ENCODE measurements at regions of chr17 and their contacts with region 1.

Region 1: DNA sequence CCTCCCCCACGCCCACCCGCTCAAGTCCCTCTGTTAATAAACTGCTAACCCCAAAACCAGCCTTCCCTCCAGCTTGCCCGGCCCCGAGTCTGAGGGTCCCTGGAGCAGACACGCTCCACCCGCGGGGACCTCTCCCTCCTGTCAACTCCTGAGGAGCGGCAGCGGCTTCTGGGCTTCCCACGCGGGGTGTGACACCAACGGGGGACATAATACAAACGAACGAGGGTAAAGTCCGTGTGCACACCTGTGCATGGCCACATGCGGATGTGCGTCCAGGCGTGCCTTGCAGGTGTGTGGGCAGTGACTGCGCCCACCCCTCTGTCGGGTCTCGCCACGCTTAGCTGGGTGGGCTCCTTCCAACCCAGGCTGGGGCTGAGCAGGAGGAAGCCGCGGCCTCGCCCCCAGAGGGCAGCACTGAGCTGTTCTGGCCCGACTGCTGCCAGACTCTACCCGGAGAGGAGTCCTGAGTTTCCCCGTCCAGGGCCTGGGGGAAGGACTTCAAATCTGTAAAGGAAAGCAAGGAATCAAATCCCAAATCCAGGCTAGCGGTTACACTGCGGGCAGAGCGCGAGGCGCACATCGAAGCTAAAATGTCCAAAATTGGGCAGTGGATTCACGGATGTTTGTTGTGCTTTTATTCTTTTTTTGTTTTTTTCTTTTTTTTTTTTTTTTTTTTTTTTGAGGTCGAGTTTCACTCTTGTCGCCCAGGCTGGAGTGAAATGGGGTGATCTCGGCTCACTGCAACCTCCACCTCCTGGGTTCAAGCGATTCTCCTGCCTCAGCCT is 24.2 kb upstream of the KRT17 start:
- DNase-seq: peak; percentile 76
- H3K27ac ChIP-seq: peak overlapping the region; percentile 100
- CTCF ChIP-seq: peak; percentile 85

Region 2: GRCh38 chr17:41251261-41251660 is 397.3 kb before region 1 on chr17:
- CTCF ChIA-PET with region 1: no interaction called
- POLR2A ChIA-PET with region 1: no interaction called
- DNase-seq: no peak
- H3K27ac ChIP-seq: no peak overlapping the region
- CTCF ChIP-seq: no peak

Region 3: DNA sequence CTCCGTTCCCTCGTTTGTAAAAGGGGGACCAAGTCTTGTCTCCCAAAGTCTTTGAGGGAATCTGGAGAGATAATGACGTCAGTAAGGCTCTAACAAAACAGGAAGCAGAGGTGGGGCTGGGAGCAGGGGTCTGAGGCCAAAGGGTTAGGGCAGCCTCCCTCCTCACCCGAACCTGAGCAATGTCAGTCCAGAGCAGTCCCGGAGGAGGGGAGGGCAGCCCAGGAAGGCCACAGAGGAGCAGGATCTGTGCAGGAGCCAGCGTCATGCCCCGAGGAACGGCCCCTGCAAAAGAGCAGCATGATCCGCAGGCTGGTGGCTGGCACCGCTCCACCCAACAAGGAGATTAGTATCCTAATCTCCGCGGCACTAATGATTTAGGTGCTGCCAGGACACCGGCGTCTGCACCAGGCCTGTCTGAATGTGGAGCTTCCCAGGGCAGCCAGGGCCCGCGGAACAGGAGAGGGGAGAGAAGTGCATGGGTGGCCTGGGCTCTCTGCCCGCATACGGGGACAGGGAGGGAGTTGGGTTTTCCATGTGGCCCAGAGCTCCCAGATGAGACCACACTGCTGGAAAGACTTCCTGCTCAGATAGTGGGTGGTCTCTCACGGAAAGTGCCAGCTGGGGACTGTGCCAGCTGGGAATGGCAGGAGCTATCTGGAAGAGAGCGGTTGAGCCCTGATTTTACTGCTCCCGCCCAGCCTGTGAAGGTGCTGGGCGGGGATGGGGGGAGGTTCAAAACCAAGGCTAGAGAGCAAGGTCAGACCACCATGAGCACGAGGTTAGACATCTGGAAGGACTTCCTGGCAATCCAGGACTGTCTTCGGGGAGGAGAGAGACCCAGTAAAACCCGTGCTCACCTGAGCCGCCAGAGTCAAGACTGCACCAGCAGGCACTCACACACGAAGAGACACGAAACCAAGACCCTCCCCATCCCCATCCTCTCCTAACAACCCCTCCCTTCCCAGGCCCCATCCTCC is 13.2 kb before region 1 on chr17:
- CTCF ChIA-PET with region 1: interaction called, 13 read pairs
- POLR2A ChIA-PET with region 1: no interaction called
- DNase-seq: no peak
- H3K27ac ChIP-seq: peak overlapping the region; percentile 56
- CTCF ChIP-seq: no peak

Measured in RWPE1 (cell line).